ENCODE measurements at regions of chr7 and their contacts with region 1.

Region 1: DNA sequence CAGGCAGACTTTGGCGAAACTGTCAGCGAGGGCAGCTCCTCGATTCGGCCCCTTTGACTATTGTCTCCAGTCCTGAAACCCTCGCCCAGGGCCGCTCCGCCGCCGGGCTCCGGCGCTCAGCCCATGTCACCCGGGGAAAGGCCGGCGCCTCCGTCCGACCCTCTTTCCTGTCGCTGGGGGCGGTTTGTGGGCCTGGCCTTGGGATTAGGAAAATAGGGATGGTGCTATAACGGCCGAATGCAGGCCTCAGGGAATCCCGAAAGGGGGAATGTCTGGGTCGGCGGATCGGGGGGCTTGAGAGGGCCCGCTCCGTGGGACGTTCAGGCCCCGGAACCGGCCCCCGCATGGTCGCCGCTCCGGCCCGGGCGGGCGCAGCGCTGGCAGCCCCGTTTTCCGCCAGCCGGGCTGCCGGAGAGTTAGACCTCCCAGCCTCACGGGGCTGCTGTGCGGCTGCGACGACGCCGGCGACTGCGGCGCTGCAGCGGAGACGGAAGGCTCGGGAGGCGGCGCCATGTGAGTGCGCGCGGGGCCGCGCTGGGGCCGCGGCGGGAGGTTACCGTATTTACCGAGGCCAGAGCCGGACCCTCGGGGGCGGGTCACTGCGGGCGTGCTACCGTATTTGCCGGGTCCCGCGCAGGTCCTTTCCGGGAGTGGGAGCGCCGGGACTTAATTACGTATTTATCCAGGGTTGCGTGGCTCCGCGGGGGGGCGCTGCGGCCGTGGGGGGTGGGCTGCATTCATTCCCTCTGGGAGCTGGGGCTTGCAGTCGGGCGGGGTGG is 25.9 kb downstream of the ZNF775 start:
- DNase-seq: peak; percentile 87
- H3K4me3 ChIP-seq: peak overlapping the region; percentile 69
- H3K27ac ChIP-seq: peak overlapping the region; percentile 79
- H3K4me1 ChIP-seq: peaks cover 17% of the 10 kb centered on the region
- H3K27me3 ChIP-seq: no peaks in the 10 kb centered on the region
- CTCF ChIP-seq: peak; percentile 34; the same call in 1 of the 2 replicates

Region 2: GRCh38 chr7:151754142-151754590 is 1349.2 kb after region 1 on chr7:
- CTCF ChIA-PET with region 1: interaction called, 10 read pairs
- POLR2A ChIA-PET with region 1: no interaction called
- intact Hi-C with region 1: no loop called
- DNase-seq: peak; percentile 94
- H3K4me3 ChIP-seq: no peak overlapping the region
- H3K27ac ChIP-seq: peak overlapping the region; percentile 34
- H3K4me1 ChIP-seq: peaks cover 12% of the 10 kb centered on the region
- H3K27me3 ChIP-seq: no peaks in the 10 kb centered on the region
- CTCF ChIP-seq: peak; percentile 97

Measured in A673 (cell line).